Ascending aorta (tissue), 2 donors: ENCODE measurements at regions of chr13 and their contacts with region 1.

Region 1: DNA sequence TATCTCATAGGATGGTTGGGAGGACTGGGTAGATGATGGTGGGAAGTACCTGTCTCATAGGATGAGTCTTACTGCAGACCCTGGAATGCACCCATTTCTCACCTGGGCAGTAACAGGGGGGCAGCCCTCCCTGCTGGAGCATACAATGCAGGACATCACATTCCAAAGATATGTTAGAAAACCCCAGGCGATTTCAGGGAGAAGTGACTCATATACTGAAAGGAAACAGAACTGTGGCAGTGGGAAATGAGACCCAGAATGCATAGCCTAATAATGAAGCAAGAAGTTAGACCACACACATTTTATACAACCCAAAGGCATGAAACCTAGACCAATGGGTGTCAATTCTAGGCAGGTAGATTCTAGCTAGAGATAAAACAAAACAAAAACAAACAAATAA is 402.7 kb downstream of the IRS2 start:
- DNase-seq: no peak
- H3K4me3 ChIP-seq: no peak overlapping the region
- H3K27ac ChIP-seq: no peak overlapping the region
- H3K4me1 ChIP-seq: peaks cover 0 to 5% of the 10 kb centered on the region in 2 donors
- H3K27me3 ChIP-seq: no peaks in the 10 kb centered on the region
- CTCF ChIP-seq: no peak

Region 2: DNA sequence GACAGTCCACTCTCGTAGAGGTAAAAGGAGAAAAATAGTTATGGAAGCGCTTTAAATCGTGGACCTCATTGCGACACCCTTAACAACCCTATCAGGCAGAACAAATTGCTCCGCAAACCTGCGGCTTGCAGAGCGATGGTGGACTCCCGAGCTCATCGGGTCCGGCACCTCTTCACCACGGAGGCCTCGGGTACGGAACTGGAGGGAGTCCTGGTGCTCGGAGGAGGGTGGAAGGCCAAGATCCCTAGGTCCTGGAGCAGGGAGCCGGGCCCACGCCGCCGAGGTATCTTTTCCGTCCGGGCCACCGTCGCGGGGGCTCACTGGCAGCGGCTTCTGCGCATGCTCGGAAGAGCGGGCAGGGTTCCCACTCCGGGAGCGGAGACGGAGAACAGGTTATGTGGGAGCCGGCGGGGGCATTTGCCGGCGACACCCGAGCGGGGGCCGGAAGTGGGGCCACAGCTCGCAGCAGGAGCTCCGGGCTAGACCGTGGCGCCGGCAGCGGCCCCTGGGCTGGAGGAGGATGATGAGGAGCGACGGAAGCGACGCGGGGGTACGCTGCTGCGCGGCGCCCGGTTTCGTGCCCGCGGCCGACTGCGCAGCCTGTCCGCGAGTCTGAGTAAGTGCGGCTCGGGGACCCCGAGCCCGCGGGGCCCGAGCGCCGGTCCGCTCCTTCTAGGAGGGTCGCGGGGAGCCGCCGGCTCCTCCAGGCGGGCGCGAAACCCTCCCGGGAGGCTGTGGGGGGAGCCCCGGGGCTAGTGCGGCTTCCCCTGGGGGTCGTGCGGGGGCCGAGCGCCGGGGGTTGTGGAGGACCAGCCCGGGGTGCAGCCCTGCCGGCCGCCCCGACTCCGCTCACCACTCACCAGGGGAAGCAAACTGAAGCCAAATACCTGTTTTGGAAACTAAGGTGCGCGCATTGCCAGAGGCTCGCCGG is 1165.4 kb before region 1 on chr13 and contains the start of gene ABHD13:
- intact Hi-C with region 1: no loop called
- DNase-seq: peak; percentile 46 to 94
- H3K4me3 ChIP-seq: peak within 1 kb of the TSS; percentile 74 to 92
- H3K27ac ChIP-seq: peak within 1 kb of the TSS; percentile 74 to 84
- H3K4me1 ChIP-seq: peaks cover 4 to 17% of the 10 kb centered on the region in 2 donors
- H3K27me3 ChIP-seq: no peaks in the 10 kb centered on the region
- CTCF ChIP-seq: peak in 1 of 3 experiments; percentile 7
- total RNA-seq, gene ABHD13: 4.5 TPM

Region 3: DNA sequence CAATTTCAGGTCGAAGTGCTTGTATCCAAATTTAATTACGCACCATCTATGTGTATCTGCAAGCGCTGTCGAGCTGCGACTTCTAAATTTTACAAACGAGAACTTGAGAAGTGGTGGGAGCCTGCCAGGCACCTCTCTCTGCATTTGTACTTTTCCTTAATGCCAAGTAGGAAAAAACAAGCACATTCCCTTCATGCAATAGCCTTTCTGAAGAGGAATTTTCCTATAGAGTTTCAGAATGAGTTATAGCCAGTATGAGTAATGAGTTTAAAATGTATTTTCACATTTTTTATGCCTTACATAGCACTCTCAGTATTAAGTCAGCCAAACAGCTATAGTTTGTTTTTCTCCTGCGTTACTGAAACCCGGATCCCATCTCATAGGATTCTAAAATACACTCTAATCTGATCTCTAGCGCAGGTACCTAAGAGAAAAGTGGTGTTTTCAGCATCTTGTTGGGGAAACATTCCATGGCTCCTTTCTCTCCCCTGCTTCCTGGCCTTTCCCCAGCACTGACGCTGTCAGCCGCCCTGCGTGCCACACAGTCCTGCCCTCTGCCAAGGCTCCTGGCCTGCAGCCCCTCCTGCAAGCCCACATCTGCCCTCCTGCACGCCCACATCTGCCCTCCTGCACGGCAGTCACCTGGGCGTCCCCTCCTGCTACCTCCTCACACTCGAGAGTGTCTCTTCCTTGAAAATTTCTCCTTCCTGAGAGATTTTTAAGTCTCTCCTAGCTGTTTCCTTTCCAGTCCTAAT is 227.3 kb before region 1 on chr13:
- intact Hi-C with region 1: loop called (anchors 5 kb)
- DNase-seq: peak in 1 of 2 donors; percentile 81
- H3K4me3 ChIP-seq: peak overlapping the region; percentile 23 to 30
- H3K27ac ChIP-seq: peak overlapping the region; percentile 70 to 72
- H3K4me1 ChIP-seq: peaks cover 0 to 18% of the 10 kb centered on the region in 2 donors
- H3K27me3 ChIP-seq: no peaks in the 10 kb centered on the region
- CTCF ChIP-seq: no peak

Region 4: DNA sequence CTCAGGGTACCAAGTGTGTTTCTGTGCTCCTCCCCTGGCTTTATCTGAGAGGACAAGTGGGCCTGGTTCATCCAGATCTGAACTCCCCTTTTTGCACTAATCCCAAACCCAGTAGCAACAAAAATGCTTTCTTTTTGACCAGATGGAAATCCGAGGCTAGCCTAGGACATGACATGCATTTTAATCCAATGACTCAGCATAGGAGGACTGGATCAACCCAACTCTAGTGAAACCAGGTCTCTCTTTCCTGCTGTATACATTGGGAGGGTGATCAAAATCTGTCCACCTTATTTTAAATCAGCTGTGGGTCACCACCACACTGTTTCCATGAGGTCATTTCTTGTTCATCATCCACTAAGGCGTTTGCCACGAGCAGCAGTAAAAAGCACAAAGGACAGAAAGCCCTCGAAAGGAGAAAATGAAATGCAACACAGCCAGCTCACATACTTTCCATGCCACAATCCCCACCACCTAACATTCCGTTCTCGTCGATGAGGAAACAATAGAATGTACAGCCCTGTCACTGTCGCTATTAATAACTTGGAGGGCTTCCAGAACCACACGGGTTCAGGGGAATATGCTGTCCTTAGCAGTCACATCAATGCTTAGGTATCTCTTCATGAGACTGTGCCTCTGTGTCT is 140.2 kb before region 1 on chr13:
- intact Hi-C with region 1: loop called (anchors 10 kb)
- DNase-seq: peak in 1 of 2 donors; percentile 79
- H3K4me3 ChIP-seq: peak overlapping the region; percentile 37
- H3K27ac ChIP-seq: peak overlapping the region; percentile 59 to 77
- H3K4me1 ChIP-seq: peaks cover 0 to 19% of the 10 kb centered on the region in 2 donors
- H3K27me3 ChIP-seq: no peaks in the 10 kb centered on the region
- CTCF ChIP-seq: no peak

Region 5: GRCh38 chr13:109427148-109427547 is 43.5 kb after region 1 on chr13:
- intact Hi-C with region 1: no loop called
- DNase-seq: no peak
- H3K4me3 ChIP-seq: no peak overlapping the region
- H3K27ac ChIP-seq: no peak overlapping the region
- H3K4me1 ChIP-seq: no peaks in the 10 kb centered on the region
- H3K27me3 ChIP-seq: no peaks in the 10 kb centered on the region
- CTCF ChIP-seq: no peak

Region 6: GRCh38 chr13:109465156-109465555 is 81.5 kb after region 1 on chr13:
- intact Hi-C with region 1: no loop called
- DNase-seq: no peak
- H3K4me3 ChIP-seq: no peak overlapping the region
- H3K27ac ChIP-seq: no peak overlapping the region
- H3K4me1 ChIP-seq: no peaks in the 10 kb centered on the region
- H3K27me3 ChIP-seq: no peaks in the 10 kb centered on the region
- CTCF ChIP-seq: no peak